Activated T-helper 1 cell treated with anti-CD3 and anti-CD28 coated beads, Interleukin-12 subunit alpha, Interleukin-12 subunit beta, Interleukin-2, Interleukin-4 antibody, amounts not matched to agents 30 ng/mL and 10 ng/mL and 1 ng/mL, durations not matched to agents 14 hours and 24 hours and 36 hours (primary cell): ENCODE measurements at regions of chr6 and their contacts with region 1.

Region 1: GRCh38 chr6:145015739-145016558 is 719.4 kb downstream of the EPM2A start:
- DNase-seq: peak; percentile 6
- H3K4me3 Mint-ChIP-seq: peak overlapping the region; percentile 16
- H3K27ac Mint-ChIP-seq: peak overlapping the region; percentile 45
- H3K4me1 Mint-ChIP-seq: peaks cover 27% of the 10 kb centered on the region
- H3K27me3 Mint-ChIP-seq: peaks cover 2% of the 10 kb centered on the region

Region 2: DNA sequence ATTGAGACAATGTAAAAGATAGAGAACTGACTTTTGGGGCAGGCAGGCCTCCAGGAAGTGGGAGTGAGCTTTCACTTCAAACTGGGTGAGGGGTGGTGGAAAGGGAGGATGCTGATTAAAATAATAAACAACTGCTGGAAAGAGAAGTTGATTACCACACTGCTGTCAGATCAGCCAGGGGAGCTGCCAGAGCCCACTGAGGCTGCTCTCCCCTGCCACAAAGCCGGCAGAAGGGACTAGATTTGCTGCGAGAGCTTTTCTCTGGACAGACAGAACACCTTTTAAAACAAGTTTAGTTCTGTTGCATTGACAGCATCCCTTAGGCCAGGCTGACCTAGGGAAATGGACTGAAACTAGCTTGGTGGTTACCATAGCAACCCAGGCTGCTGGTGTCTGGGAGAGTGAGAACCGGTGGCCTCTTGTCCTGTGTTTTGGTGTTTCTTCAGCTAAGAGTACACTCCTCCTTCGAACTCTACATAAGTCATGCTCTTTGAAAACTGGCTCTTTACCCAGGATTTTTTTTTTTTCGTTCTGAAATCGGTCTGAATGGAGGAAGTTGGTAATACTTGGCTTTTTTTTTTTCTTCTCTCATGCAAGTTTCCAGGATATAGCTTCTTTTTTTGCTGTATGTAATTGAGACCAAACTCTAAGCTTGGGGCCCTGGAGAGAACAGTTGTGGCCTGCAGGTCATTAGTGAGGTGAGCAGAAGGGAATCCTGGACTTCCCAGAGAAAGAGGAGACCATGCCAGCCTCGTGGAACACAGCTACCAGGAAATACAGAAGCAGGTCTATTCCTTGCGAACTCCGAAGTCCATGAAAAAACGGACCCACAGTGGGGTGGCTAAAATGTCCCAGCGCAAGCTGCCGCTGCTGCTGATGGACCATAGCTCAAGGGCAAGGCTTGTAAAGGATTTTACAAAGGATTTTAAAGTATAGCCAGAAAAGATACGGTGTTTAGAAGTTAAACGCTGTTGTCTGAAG is 356.5 kb before region 1 on chr6:
- intact Hi-C with region 1: loop called (anchors 5 kb)
- DNase-seq: peak; percentile 3
- H3K4me3 Mint-ChIP-seq: peak overlapping the region; percentile 15
- H3K27ac Mint-ChIP-seq: peak overlapping the region; percentile 69
- H3K4me1 Mint-ChIP-seq: peaks cover 36% of the 10 kb centered on the region
- H3K27me3 Mint-ChIP-seq: no peaks in the 10 kb centered on the region

Region 3: GRCh38 chr6:145028144-145028818 is 12.3 kb after region 1 on chr6:
- intact Hi-C with region 1: loop called (anchors 1 kb)
- DNase-seq: no peak
- H3K4me3 Mint-ChIP-seq: no peak overlapping the region
- H3K27ac Mint-ChIP-seq: no peak overlapping the region
- H3K4me1 Mint-ChIP-seq: peaks cover under 1% of the 10 kb centered on the region
- H3K27me3 Mint-ChIP-seq: peaks cover 28% of the 10 kb centered on the region

Region 4: DNA sequence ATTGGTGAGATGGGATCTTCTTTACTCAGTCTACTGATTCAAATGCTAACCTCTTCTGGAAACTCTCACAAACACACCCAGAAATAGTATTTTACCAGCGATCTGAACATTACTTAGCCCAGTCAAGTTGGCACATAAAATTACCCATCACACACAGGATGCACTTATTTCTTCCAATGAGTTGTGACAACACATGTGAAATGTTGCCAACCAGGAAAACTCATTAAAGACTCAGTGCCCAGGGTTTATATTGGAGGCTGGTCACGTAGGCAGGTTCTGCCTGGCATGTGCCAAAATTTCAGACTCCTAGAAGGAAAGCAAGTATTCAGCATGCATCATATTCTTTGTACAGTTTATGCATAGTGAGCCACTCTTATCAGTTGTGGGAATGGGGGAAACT is 276.1 kb after region 1 on chr6:
- intact Hi-C with region 1: no loop called
- DNase-seq: no peak
- H3K4me3 Mint-ChIP-seq: no peak overlapping the region
- H3K27ac Mint-ChIP-seq: no peak overlapping the region
- H3K4me1 Mint-ChIP-seq: no peaks in the 10 kb centered on the region
- H3K27me3 Mint-ChIP-seq: no peaks in the 10 kb centered on the region

Region 5: GRCh38 chr6:145415616-145416015 is 399.7 kb after region 1 on chr6:
- intact Hi-C with region 1: no loop called
- DNase-seq: no peak
- H3K4me3 Mint-ChIP-seq: no peak overlapping the region
- H3K27ac Mint-ChIP-seq: no peak overlapping the region
- H3K4me1 Mint-ChIP-seq: no peaks in the 10 kb centered on the region
- H3K27me3 Mint-ChIP-seq: no peaks in the 10 kb centered on the region